Activated CD8-positive, alpha-beta T cell treated with anti-CD3 and anti-CD28 coated beads, Interleukin-2, amount 10 ng/mL, durations not matched to agents 7 days and 5 days (primary cell): ENCODE measurements at regions of chr1 and their contacts with region 1.

Region 1: DNA sequence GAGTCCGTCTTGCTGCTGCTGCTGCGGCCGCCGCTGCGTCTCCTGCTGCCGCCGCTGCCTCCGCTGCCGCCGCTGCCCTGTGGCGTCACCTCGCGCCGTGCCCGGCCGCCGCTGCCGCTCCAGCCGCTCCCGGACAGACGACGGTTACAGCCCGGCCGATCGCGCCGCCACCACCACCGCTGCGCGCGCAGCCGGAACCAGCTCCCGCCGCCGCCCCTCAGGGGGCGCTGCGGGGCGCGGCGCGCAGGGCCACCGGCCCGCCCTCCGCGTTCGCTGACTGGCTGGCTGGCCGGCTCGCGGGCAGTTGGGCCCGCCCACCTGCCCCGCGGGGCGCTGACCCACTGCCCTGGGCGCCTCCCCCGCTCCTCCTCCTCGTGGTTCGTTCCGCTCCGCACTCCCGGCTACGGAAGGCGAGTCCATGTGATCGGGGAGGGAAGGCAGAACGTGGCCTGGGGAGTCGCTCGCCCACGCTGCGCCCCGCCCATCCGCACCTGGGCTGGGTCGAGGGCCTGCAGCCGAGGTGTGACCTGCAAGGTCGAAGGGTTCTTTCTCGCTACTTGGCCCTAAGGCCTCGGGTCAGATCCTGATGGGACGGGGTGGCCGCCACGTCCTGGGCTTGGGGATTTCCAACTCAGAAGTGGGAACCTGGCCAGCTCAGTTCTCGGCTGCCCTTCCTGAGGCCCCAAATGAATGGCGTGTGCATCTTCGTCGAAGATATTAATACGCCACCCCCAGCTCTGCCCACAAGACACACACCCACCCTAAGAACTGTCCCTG is at the start of gene PTP4A2:
- DNase-seq: peak; percentile 90
- ATAC-seq: peak; percentile 73
- H3K4me3 Mint-ChIP-seq: peak within 1 kb of the TSS; percentile 86
- H3K27ac Mint-ChIP-seq: peak within 1 kb of the TSS; percentile 99
- H3K4me1 Mint-ChIP-seq: peaks cover 70% of the 10 kb centered on the region
- H3K27me3 Mint-ChIP-seq: no peaks in the 10 kb centered on the region
- total RNA-seq, gene PTP4A2: 409 to 419 TPM

Region 2: GRCh38 chr1:31923901-31924535 is 14.3 kb before region 1 on chr1:
- CTCF ChIA-PET with region 1: interaction called, 26 read pairs
- POLR2A ChIA-PET with region 1: interaction called, 30 read pairs
- DNase-seq: no peak
- ATAC-seq: no peak
- H3K4me3 Mint-ChIP-seq: peak overlapping the region; percentile 37
- H3K27ac Mint-ChIP-seq: peak overlapping the region; percentile 81
- H3K4me1 Mint-ChIP-seq: peaks cover 78% of the 10 kb centered on the region
- H3K27me3 Mint-ChIP-seq: no peaks in the 10 kb centered on the region

Region 3: GRCh38 chr1:31961536-31961935 is 23.2 kb after region 1 on chr1:
- CTCF ChIA-PET with region 1: interaction called, 664 read pairs
- POLR2A ChIA-PET with region 1: interaction called, 157 read pairs
- DNase-seq: no peak
- ATAC-seq: no peak
- H3K4me3 Mint-ChIP-seq: peak overlapping the region; percentile 29
- H3K27ac Mint-ChIP-seq: peak overlapping the region; percentile 71
- H3K4me1 Mint-ChIP-seq: peaks cover 75% of the 10 kb centered on the region
- H3K27me3 Mint-ChIP-seq: no peaks in the 10 kb centered on the region

Region 4: GRCh38 chr1:32005522-32005921 is 67.2 kb after region 1 on chr1:
- CTCF ChIA-PET with region 1: interaction called, 12 read pairs
- POLR2A ChIA-PET with region 1: no interaction called
- DNase-seq: no peak
- ATAC-seq: no peak
- H3K4me3 Mint-ChIP-seq: no peak overlapping the region
- H3K27ac Mint-ChIP-seq: no peak overlapping the region
- H3K4me1 Mint-ChIP-seq: peaks cover 25% of the 10 kb centered on the region
- H3K27me3 Mint-ChIP-seq: peaks cover 3% of the 10 kb centered on the region